ENCODE measurements at regions of chr4 and their contacts with region 1.

Region 1: DNA sequence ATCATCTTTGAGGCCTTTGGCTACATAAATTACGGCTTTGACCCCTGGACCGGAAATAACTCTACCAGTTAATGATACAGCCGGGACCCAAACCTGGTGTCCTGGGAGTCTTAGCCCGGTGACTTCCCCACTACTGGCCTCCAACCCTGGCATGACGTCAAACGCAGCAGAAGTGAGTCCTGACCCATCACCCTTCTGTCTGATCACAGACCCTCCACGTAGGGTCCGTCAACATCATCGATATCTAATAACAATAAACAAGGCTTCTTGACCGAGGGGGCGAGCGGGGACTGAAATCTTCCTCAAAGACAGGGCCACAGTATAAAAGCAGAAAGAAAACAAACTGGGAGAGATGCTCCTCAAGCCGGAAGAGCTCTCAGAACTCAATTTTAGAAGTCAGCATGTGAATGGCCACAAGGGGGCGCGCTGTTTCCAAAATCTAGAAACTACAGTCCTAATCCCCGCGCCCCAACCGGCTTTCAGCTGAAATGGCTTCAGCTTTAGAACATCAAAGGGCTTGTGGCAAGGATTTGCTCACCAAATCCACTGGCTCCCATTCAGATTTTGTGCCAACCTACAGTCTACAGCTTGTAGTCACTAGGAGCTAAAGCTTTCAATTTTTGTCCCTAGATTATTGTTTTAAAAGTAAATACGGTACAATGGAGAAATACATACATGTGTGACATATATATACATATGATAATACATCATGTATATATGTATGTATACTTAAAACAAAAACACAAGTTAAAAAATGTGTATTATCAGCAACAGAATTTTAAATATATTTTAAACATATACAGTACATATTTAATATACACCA is 46.4 kb upstream of the ENPP6 start:
- DNase-seq: peak; percentile 98
- ATAC-seq: peak; percentile 64
- H3K4me3 Mint-ChIP-seq: peak overlapping the region; percentile 48
- H3K27ac Mint-ChIP-seq: peak overlapping the region; percentile 63
- H3K4me1 Mint-ChIP-seq: peaks cover 50% of the 10 kb centered on the region
- H3K27me3 Mint-ChIP-seq: no peaks in the 10 kb centered on the region

Region 2: GRCh38 chr4:183362916-183363542 is 901.1 kb before region 1 on chr4:
- CTCF ChIA-PET with region 1: no interaction called
- POLR2A ChIA-PET with region 1: no interaction called
- DNase-seq: no peak
- ATAC-seq: no peak
- H3K4me3 Mint-ChIP-seq: no peak overlapping the region
- H3K27ac Mint-ChIP-seq: no peak overlapping the region
- H3K4me1 Mint-ChIP-seq: no peaks in the 10 kb centered on the region
- H3K27me3 Mint-ChIP-seq: no peaks in the 10 kb centered on the region

Region 3: DNA sequence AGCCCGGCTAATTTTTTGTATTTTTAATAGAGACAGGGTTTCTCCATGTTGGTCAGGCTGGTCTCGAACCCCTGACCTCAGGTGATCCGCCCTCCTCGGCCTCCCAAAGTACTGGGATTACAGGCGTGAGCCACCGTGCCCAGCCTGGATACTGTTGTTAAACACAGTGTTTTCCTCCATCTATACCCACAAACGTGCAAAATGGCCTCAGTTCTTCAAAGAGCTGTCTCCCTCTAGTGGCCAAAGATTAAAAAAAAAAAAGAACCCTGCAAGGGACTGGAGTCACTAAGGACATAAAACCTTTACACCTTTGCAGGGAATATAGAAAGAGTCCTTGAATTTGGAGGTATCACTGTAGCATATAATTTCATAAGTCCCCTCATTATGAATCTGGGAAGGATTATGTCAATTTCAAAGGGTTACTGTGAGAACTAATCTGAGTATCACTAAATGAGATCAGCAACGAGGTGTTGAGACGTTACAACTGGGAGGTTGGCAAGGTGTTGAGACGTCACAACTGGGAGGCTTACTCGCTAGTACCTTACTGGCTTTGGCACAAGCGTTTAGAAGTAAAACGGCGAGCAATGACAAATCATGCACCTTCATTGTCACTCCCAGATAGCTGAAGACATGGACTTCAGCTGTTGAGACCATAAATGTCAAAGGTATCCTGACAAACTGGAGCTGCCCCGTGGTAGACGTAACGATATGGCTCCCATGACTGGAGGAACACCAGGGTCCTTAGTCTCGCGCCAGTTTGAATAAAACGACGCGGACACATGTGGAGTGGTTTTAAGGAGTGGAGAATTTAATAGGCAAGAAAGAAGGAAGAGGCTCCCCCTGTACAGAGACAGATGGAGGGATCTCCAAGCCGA is 13.1 kb before region 1 on chr4:
- CTCF ChIA-PET with region 1: interaction called, 42 read pairs
- POLR2A ChIA-PET with region 1: interaction called, 4 read pairs
- DNase-seq: peak; percentile 49
- ATAC-seq: peak; percentile 85
- H3K4me3 Mint-ChIP-seq: no peak overlapping the region
- H3K27ac Mint-ChIP-seq: peak overlapping the region; percentile 63
- H3K4me1 Mint-ChIP-seq: peaks cover 13% of the 10 kb centered on the region
- H3K27me3 Mint-ChIP-seq: peaks cover 2% of the 10 kb centered on the region

Region 4: DNA sequence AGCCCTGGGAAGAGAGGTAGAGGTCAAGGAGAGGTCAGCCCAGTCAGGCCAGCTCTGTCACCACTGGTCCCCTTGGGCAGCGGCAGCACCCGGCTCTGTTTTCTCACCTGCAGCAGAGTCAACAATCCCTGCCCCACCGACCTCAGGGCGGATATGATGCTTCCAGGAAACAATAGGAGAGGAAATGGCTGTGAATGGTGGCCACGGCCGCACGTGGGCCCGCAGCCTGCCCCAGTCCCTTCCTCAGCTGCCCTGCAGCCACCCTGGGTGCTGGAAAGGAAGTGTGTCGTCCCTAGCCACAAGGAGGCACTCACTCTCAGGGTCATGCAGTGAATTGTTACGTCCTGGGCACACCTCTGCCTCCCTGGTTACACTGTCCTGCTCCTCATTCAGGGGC is 46.0 kb after region 1 on chr4:
- CTCF ChIA-PET with region 1: interaction called, 16 read pairs
- POLR2A ChIA-PET with region 1: interaction called, 3 read pairs
- DNase-seq: peak; percentile 64
- ATAC-seq: peak; percentile 47
- H3K4me3 Mint-ChIP-seq: no peak overlapping the region
- H3K27ac Mint-ChIP-seq: peak overlapping the region; percentile 81
- H3K4me1 Mint-ChIP-seq: peaks cover 65% of the 10 kb centered on the region
- H3K27me3 Mint-ChIP-seq: no peaks in the 10 kb centered on the region

Region 5: DNA sequence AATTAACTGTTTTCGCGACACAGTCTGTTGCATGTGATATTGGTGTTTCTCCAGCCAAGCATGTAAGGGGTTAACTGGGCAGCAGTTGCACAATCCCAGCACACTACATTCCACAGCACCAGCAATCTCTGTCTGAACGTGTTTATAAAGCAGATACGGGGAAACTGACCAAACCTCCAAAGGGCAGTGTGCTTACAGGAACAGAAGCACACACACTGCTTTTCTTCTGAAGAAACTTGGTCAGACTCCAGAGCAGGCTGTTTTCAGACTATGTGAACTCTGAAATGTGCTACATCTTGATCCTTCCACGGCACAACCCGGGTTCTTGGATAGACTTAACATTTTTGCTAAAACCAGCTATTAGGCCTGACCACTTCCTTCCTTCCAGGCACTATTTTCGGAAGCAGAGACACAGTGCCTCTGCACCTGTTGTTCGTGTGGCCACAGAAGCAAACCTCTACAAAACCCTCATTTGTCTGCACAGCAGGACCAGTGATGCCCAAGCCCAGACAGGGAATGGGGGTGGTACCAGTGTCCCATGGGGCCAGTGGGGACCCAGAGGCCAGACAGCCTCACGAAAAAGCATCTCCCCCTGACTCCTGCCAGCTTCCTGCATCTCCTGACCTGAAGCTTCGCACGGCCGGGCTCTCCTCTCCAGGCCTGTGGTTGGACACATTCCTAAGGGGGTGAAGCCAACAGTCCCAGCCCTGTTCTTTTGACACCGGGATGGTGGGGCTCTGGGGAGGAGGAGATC is 120.1 kb after region 1 on chr4:
- CTCF ChIA-PET with region 1: interaction called, 32 read pairs
- POLR2A ChIA-PET with region 1: no interaction called
- DNase-seq: peak; percentile 58
- ATAC-seq: peak; percentile 60
- H3K4me3 Mint-ChIP-seq: peak overlapping the region; percentile 55
- H3K27ac Mint-ChIP-seq: peak overlapping the region; percentile 84
- H3K4me1 Mint-ChIP-seq: peaks cover 65% of the 10 kb centered on the region
- H3K27me3 Mint-ChIP-seq: no peaks in the 10 kb centered on the region

Region 6: DNA sequence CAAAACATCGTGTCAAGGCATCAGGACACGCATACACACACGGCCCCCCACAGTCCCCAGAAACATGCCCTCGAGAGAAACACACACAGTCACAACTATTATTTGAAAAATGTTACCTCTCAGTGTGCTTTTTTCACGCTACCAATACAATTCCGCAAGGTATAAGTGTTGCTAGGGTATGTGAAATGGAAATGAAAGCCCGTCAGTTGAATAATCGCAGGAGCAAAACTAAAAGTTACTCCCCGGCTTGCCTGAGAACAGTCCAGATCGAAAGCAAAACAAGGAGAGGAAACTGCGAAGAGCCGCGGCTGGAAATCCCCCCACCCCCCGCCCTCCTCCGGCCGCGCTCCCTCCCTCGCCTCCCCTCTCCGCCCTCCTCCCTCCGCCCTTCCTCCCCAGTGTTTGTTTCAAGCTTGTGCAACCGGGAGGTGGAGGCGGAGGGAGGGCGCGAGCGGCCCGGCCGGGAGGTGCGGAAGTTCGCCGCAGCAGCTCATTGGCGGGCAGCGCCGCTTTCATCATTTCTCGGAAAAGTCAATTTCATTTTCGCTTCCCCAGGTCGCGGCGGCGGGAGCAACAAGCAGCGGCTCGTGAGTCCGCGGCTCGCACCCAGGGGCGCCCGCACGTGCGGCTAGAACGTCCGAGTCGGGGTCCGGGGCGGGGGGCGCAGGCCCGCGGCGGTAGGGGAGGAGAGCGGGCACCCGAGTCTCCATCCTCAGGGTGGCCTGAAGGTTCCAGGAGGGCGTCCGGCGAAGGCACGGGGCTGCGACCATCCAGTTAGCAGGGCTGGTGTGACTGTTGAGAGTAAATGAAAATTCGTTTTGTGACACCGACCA is 210.4 kb after region 1 on chr4 and contains the start of gene IRF2:
- CTCF ChIA-PET with region 1: interaction called, 15 read pairs
- POLR2A ChIA-PET with region 1: interaction called, 55 read pairs
- DNase-seq: peak; percentile 99
- ATAC-seq: peak; percentile 75
- H3K4me3 Mint-ChIP-seq: peak within 1 kb of the TSS; percentile 99
- H3K27ac Mint-ChIP-seq: peak within 1 kb of the TSS; percentile 99
- H3K4me1 Mint-ChIP-seq: peaks cover 57% of the 10 kb centered on the region
- H3K27me3 Mint-ChIP-seq: no peaks in the 10 kb centered on the region
- total RNA-seq, gene IRF2: 59.7 to 65.3 TPM

Region 7: GRCh38 chr4:184733654-184734524 is 469.8 kb after region 1 on chr4 and contains the start of gene CENPU:
- CTCF ChIA-PET with region 1: interaction called, 18 read pairs
- POLR2A ChIA-PET with region 1: interaction called, 12 read pairs
- DNase-seq: peak; percentile 96
- ATAC-seq: peak; percentile 93
- H3K4me3 Mint-ChIP-seq: peak within 1 kb of the TSS; percentile 98
- H3K27ac Mint-ChIP-seq: peak within 1 kb of the TSS; percentile 95
- H3K4me1 Mint-ChIP-seq: peaks cover 46% of the 10 kb centered on the region
- H3K27me3 Mint-ChIP-seq: no peaks in the 10 kb centered on the region
- total RNA-seq, gene CENPU: 58.7 to 59.1 TPM

Region 8: GRCh38 chr4:184899261-184900134 is 635.4 kb after region 1 on chr4:
- CTCF ChIA-PET with region 1: no interaction called
- POLR2A ChIA-PET with region 1: no interaction called
- DNase-seq: no peak
- ATAC-seq: no peak
- H3K4me3 Mint-ChIP-seq: no peak overlapping the region
- H3K27ac Mint-ChIP-seq: no peak overlapping the region
- H3K4me1 Mint-ChIP-seq: peaks cover 3% of the 10 kb centered on the region
- H3K27me3 Mint-ChIP-seq: peaks cover 20% of the 10 kb centered on the region